ENCODE measurements at regions of chr12 and their contacts with region 1.

Region 1: GRCh38 chr12:6904280-6905278 is at the start of gene LRRC23:
- DNase-seq: peak; percentile 97
- H3K4me3 Mint-ChIP-seq: no peak within 1 kb of the TSS
- H3K27ac Mint-ChIP-seq: no peak within 1 kb of the TSS
- H3K4me1 Mint-ChIP-seq: peaks cover 6% of the 10 kb centered on the region
- H3K27me3 Mint-ChIP-seq: no peaks in the 10 kb centered on the region
- total RNA-seq, gene LRRC23: 4.7 and 6.6 TPM in 2 replicates

Region 2: GRCh38 chr12:5567016-5567725 is 1337.4 kb before region 1 on chr12:
- intact Hi-C with region 1: no loop called
- DNase-seq: no peak
- H3K4me3 Mint-ChIP-seq: no peak overlapping the region
- H3K27ac Mint-ChIP-seq: no peak overlapping the region
- H3K4me1 Mint-ChIP-seq: no peaks in the 10 kb centered on the region
- H3K27me3 Mint-ChIP-seq: peaks cover 2% of the 10 kb centered on the region

Region 3: DNA sequence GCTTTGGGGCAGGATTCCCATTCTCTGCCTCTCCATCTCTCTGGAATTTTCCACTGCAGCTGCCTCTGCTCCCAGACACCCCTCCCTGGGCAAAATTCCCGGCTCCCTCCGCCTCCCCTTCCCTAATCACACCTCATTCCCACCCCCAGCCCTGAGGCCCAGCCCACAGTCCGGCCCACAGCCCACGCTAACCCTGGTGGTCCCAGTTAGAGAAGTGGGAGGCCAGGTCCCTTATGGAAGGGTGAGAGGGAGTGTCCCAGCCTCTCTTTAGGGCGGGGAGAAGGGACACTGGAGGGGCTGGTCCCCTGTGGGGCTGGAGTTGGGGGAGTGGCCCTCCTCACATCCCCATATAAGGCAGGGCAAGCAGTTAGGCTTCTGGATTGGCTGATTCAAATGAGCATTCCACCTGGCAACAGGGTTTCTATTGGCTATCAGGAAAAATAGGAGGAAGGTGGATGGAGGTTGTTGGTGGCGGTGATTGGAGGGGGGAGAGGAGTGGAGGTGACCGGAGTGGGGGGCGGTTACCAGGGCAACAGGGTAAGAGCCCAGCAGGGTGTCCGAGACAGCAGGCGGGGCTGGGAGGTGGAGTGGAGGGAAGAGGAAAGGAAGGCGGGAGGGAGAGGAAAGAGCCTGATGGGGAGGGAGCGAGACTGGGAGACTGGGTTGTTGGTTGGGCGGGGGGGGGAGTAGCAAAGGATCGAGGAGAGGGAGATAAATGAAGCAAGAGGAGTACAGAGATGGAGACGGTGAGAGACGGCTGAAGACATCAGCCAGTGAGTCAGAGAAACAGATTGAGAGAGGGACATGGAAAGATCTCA is 140.4 kb before region 1 on chr12:
- intact Hi-C with region 1: no loop called
- DNase-seq: peak; percentile 67
- H3K4me3 Mint-ChIP-seq: peak overlapping the region; percentile 67
- H3K27ac Mint-ChIP-seq: peak overlapping the region; percentile 30
- H3K4me1 Mint-ChIP-seq: peaks cover 34% of the 10 kb centered on the region
- H3K27me3 Mint-ChIP-seq: peaks cover 11% of the 10 kb centered on the region

Region 4: GRCh38 chr12:6890789-6891645 is 13.6 kb before region 1 on chr12:
- intact Hi-C with region 1: loop called (anchors 1 kb)
- DNase-seq: peak; percentile 98
- H3K4me3 Mint-ChIP-seq: peak overlapping the region; percentile 80
- H3K27ac Mint-ChIP-seq: peak overlapping the region; percentile 92
- H3K4me1 Mint-ChIP-seq: peaks cover 13% of the 10 kb centered on the region
- H3K27me3 Mint-ChIP-seq: no peaks in the 10 kb centered on the region

Region 5: GRCh38 chr12:6978609-6979011 is 74.0 kb after region 1 on chr12:
- intact Hi-C with region 1: no loop called
- DNase-seq: no peak
- H3K4me3 Mint-ChIP-seq: no peak overlapping the region
- H3K27ac Mint-ChIP-seq: no peak overlapping the region
- H3K4me1 Mint-ChIP-seq: peaks cover 2% of the 10 kb centered on the region
- H3K27me3 Mint-ChIP-seq: no peaks in the 10 kb centered on the region